ENCODE measurements at regions of chr7 and their contacts with region 1.

Region 1: GRCh38 chr7:30134611-30135545 is at the start of gene MTURN:
- DNase-seq: peak; percentile 85
- ATAC-seq: peak; percentile 82
- H3K4me3 Mint-ChIP-seq: peak within 1 kb of the TSS; percentile 91
- H3K27ac Mint-ChIP-seq: peak within 1 kb of the TSS; percentile 77
- H3K4me1 Mint-ChIP-seq: peaks cover 12% of the 10 kb centered on the region
- H3K27me3 Mint-ChIP-seq: peaks cover 11% of the 10 kb centered on the region
- CTCF ChIP-seq: no peak
- total RNA-seq, gene MTURN: 2.8 and 4.6 TPM in 2 replicates

Region 2: DNA sequence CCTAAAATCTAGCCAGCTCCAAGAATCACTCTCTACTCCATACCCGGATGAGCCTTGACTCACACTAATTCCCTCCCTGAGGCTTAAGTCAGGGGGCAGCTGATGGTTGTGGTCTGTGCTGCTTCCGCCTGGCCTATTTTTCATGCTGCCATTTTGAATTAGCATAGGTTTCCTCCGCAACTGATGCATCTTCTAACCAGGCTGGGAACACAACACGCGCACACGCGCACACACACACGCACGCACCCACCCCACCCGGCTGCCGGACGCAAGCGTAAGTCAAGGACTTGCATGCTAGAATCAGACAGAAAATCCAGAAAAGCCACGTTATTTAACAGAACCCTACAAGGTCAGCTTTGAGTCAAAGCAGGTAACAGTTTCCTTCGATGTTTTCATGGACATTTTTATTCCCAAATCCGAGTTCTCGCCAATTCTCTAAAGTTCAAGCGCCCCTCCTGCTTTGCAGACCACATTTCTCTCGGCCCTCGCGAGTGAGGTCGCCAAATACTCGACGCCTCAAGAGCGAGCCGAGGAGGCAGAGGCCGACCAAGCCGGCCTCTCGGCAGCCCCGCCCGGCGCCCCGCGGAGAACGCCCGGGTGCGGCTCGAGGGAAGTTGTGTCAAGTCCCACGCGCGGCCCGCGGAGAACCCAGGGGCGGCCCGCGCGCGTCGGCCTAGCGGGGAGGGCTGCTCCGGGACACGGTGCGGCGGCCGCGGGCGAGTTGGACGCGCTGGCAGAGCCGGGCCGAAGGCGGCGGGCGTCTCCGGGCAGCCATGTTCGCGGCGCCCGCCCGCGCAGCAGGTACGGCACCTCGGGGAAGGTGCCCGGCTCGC is 146.2 kb before region 1 on chr7:
- CTCF ChIA-PET with region 1: no interaction called
- POLR2A ChIA-PET with region 1: no interaction called
- intact Hi-C with region 1: loop called (anchors 2 kb)
- DNase-seq: peak; percentile 60
- ATAC-seq: peak; percentile 27
- H3K4me3 Mint-ChIP-seq: peak overlapping the region; percentile 93
- H3K27ac Mint-ChIP-seq: peak overlapping the region; percentile 97
- H3K4me1 Mint-ChIP-seq: peaks cover 37% of the 10 kb centered on the region
- H3K27me3 Mint-ChIP-seq: no peaks in the 10 kb centered on the region
- CTCF ChIP-seq: no peak

Region 3: DNA sequence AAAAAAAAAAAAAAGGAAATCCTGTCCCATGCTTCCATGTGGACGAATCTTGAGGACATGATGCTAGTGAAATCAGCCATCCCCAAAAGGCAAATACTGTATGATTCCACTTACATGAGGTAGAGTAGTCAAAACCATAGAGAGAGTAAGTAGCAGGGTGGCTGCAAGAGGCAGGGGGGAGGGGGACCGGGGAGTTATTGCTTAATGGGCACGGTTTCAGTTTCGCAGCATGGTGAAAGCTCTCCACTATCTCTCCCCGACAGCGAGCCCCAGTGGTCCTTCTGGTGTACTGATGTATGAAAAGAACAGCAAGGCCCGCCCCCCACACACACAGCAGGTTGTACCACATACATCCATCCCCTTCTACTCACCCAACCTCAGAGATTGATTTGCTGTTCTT is 310.9 kb after region 1 on chr7:
- CTCF ChIA-PET with region 1: no interaction called
- POLR2A ChIA-PET with region 1: interaction called, 11 read pairs
- intact Hi-C with region 1: no loop called
- DNase-seq: peak; percentile 66
- ATAC-seq: peak; percentile 100
- H3K4me3 Mint-ChIP-seq: no peak overlapping the region
- H3K27ac Mint-ChIP-seq: peak overlapping the region; percentile 64
- H3K4me1 Mint-ChIP-seq: peaks cover 6% of the 10 kb centered on the region
- H3K27me3 Mint-ChIP-seq: no peaks in the 10 kb centered on the region
- CTCF ChIP-seq: no peak

Measured in activated B cell treated with CpG ODN at 0.5 μM for 24 hours (primary cell).